GM10248 (cell line): ENCODE measurements at regions of chr9 and their contacts with region 1.

Region 1: DNA sequence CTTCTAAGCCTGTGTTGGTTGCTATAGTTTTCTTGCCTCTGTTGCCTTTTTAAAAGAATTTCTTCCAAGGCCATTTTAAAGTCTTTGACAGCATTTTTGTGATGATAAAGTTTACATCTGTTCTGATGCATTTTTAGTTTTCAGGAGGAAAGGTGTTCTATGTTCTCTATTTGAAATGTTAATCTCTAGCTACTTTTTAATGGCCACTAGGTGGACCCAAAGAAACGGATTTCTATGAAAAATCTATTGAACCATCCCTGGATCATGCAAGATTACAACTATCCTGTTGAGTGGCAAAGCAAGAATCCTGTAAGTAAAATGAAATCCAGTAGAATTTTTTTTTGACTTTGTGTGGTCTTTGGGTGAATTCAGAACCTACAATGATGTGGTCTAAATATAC is 60.2 kb downstream of the MELK start:
- DNase-seq: peak; percentile 32
- CTCF ChIP-seq: peak; percentile 51

Region 2: GRCh38 chr9:36572515-36573418 is 60.1 kb before region 1 on chr9 and contains the start of gene MELK:
- CTCF ChIA-PET with region 1: no interaction called
- POLR2A ChIA-PET with region 1: no interaction called
- DNase-seq: peak; percentile 95
- CTCF ChIP-seq: no peak

Region 3: DNA sequence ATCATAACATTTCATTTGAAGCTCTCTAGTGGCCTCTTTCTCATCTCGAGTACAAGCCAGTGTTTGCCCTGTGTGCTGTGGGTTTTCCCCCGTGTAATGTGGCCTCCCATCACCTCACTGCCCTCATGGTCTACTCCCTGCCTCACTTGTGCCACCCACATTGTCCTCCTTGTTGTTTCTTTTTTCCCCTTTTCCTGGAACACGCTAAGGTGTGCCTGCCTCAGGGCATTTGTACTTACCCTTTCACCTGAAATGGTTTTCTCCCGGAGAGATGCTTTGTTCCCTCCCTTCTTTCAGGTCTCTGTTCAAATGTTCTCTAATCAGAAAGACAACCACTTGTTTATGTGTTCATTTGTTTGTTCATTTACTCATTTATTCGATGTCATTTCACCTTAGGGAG is 19.9 kb before region 1 on chr9:
- CTCF ChIA-PET with region 1: interaction called, 13 read pairs
- POLR2A ChIA-PET with region 1: no interaction called
- DNase-seq: no peak
- CTCF ChIP-seq: no peak

Region 4: DNA sequence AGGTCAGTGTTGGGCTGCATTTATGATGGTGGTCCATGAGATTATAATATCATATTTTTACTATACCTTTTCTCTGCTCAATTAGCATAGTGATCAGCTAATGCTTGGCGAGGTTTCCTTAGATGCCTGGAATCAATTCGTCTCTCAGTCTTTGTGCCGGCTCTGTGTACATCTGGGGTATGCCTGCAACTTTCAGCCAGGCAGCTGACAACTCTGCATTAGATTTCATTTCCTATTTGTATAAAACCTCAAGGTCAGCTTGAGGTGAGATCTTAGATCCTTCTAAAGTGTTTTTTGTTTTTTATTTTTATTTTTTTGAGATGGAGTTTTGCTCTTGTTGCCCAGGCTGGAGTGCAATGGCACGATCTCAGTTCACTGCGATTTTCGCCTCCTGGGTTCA is 26.6 kb after region 1 on chr9:
- CTCF ChIA-PET with region 1: interaction called, 11 read pairs
- POLR2A ChIA-PET with region 1: no interaction called
- DNase-seq: peak; percentile 33
- CTCF ChIP-seq: no peak